Sigmoid colon (tissue), 7 donors: ENCODE measurements at regions of chr13 and their contacts with region 1.

Region 1: GRCh38 chr13:111216166-111216960 is 101.3 kb downstream of the ARHGEF7 start:
- DNase-seq: no peak
- H3K4me3 ChIP-seq: no peak overlapping the region
- H3K27ac ChIP-seq: peak overlapping the region in 1 of 4 donors; percentile 48
- H3K4me1 ChIP-seq: peaks cover 0 to 56% (median 41%) of the 10 kb centered on the region in 4 donors
- H3K27me3 ChIP-seq: no peaks in the 10 kb centered on the region
- CTCF ChIP-seq: peak in 1 of 4 experiments; percentile 29
- EP300 ChIP-seq: no peak
- POLR2A ChIP-seq: no peak

Region 2: GRCh38 chr13:111281751-111282311 is 65.5 kb after region 1 on chr13:
- intact Hi-C with region 1: loop called (anchors 5 kb)
- DNase-seq: no peak
- H3K4me3 ChIP-seq: no peak overlapping the region
- H3K27ac ChIP-seq: peak overlapping the region; percentile 69 to 88 (median 76)
- H3K4me1 ChIP-seq: peaks cover 0 to 47% (median 33%) of the 10 kb centered on the region in 4 donors
- H3K27me3 ChIP-seq: no peaks in the 10 kb centered on the region
- CTCF ChIP-seq: no peak
- EP300 ChIP-seq: no peak
- POLR2A ChIP-seq: no peak